ENCODE measurements at regions of chr21 and their contacts with region 1.

Region 1: DNA sequence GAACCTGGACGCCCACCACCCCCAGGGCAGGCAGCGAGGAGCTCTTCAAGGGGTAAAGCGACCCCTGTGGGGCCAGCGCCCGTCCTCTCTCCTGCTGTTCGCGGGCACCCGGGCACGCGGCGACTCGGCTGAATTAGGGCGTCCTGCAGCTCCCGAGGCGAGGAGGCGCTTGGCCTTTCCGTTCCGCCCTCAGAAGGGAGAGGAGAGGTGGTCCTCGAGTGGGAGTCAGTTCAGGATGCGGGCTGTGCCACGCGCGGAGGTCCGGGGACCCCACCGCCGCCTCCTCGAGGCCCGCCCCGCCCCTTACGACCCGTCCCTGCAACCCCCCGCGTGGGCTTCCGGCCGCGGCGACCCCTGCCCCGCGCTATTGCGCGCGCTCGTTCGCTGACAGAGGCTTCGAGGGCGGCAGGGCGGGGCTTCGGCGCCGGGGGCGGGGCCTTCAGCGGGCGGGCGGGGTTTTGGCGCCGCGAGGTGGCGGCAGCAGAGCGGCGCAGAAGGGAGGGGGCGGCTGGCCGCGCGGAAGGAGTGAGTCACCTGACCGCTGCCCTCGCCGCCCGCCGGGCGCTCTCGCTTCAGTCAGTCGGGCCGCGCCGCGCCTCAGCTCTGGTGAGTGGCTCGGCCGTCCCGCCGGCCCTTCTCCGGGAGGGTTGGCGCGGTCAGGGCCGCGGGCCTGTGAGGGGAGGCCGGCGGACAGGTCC is at the start of gene BACH1:
- DNase-seq: peak; percentile 71 to 92 (median 84)
- ATAC-seq: peak; percentile 67
- H3K4me3 ChIP-seq: peak within 1 kb of the TSS; percentile 63 to 68
- H3K4me3 Mint-ChIP-seq: peak within 1 kb of the TSS; percentile 87
- H3K27ac ChIP-seq: peak within 1 kb of the TSS; percentile 39 to 41
- H3K27ac Mint-ChIP-seq: peak within 1 kb of the TSS; percentile 88
- H3K4me1 ChIP-seq: peaks cover 54% of the 10 kb centered on the region
- H3K4me1 Mint-ChIP-seq: peaks cover 78% of the 10 kb centered on the region
- H3K27me3 ChIP-seq: no peaks in the 10 kb centered on the region
- H3K27me3 Mint-ChIP-seq: no peaks in the 10 kb centered on the region
- CTCF ChIP-seq: peak; percentile 33
- total RNA-seq, gene BACH1: 86.3 to 88.5 TPM

Region 2: DNA sequence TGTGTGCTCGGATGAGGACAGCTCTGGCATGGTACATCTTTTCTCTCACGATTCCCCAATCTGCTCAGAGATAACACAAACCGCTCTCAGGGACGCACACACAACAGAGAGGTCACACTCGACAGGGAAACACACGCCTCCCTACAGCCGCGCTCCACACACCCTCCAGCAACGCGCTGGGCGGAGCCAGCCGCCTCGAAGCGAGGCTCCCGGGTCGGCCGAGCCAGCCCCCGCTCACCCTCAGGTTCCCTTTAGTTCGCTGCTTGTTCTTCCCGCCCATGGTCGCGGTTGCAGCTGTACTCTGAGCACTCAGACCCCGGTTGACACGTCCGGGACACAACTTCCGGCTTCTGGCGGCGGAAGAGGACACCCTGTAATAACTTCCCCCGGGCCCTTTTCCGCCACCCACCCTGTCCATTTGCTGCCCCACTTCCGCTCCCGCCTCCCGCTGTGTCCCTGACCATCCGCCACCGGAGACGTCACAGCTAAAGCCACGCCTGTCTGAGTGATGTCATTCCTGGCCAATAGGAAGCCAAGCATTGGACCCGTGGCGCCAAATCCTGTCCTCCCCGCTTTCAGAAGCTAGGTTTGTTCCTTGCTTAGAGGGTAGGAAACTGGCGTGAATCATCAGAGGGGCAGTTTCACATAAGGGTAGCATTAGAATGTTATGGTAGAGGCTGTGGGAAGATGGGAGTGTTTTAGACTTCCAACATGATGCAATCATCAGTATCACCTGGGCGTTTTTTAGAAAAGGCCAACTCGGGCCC is 305.8 kb before region 1 on chr21 and contains the start of gene LTN1:
- CTCF ChIA-PET with region 1: no interaction called
- POLR2A ChIA-PET with region 1: no interaction called
- intact Hi-C with region 1: loop called in 1 of 2 experiments (anchors 1 kb)
- DNase-seq: peak; percentile 98 to 100 (median 99)
- ATAC-seq: peak; percentile 93
- H3K4me3 ChIP-seq: peak within 1 kb of the TSS; percentile 95 to 98
- H3K4me3 Mint-ChIP-seq: peak within 1 kb of the TSS; percentile 93
- H3K27ac ChIP-seq: peak within 1 kb of the TSS; percentile 84 to 88
- H3K27ac Mint-ChIP-seq: peak within 1 kb of the TSS; percentile 95
- H3K4me1 ChIP-seq: peaks cover 21% of the 10 kb centered on the region
- H3K4me1 Mint-ChIP-seq: peaks cover 40% of the 10 kb centered on the region
- H3K27me3 ChIP-seq: no peaks in the 10 kb centered on the region
- H3K27me3 Mint-ChIP-seq: no peaks in the 10 kb centered on the region
- CTCF ChIP-seq: no peak
- total RNA-seq, gene LTN1: 26.3 to 28.5 TPM

Region 3: DNA sequence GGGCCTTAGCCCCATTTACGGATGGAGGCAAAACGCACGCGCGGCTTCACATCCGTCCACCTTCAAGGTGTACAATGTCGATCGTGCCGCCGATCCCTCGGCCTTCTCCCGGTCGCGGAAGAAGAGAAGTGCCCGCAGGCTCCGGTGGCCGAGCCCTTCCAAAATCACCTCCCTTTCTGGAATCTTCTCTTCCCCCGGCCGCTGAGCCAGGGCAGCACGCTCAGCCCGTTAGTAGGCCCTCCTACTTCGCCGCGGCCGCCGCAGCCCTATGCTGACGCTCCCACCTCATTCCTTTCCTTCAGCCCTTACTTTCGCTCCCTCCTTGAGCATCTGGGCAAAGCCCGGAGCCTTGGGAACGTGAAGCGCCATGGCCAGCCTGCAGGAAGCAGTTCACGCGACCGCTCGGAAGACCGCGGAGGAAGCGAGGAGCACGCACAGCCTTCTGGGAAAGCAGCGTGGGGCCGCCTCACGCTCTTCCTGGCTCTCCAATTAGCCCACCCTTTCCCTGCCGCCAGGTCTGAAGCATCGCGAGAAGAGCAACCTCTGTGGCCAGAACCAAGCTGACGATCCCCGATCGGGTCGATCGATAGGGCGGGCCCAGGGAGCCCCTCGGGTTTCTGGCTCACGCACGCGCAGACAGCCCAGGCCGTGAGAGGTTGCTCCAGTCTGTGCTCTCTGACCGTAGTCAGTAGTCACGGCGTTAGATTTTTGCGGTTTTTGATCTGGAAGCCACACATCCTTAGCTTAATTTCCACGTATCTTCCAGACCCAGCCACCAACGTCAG is 225.1 kb before region 1 on chr21 and contains the start of gene CCT8:
- CTCF ChIA-PET with region 1: no interaction called
- POLR2A ChIA-PET with region 1: interaction called, 11 read pairs
- intact Hi-C with region 1: loop called (anchors 1 to 2 kb)
- DNase-seq: peak; percentile 95 to 100 (median 98)
- ATAC-seq: peak; percentile 93
- H3K4me3 ChIP-seq: peak within 1 kb of the TSS; percentile 88 to 92
- H3K4me3 Mint-ChIP-seq: peak within 1 kb of the TSS; percentile 100
- H3K27ac ChIP-seq: peak within 1 kb of the TSS; percentile 87 to 88
- H3K27ac Mint-ChIP-seq: peak within 1 kb of the TSS; percentile 98
- H3K4me1 ChIP-seq: peaks cover 42% of the 10 kb centered on the region
- H3K4me1 Mint-ChIP-seq: peaks cover 69% of the 10 kb centered on the region
- H3K27me3 ChIP-seq: no peaks in the 10 kb centered on the region
- H3K27me3 Mint-ChIP-seq: no peaks in the 10 kb centered on the region
- CTCF ChIP-seq: no peak
- total RNA-seq, gene CCT8: 104 to 116 TPM

Region 4: GRCh38 chr21:29265690-29266479 is 32.6 kb before region 1 on chr21:
- CTCF ChIA-PET with region 1: no interaction called
- POLR2A ChIA-PET with region 1: no interaction called
- intact Hi-C with region 1: no loop called
- DNase-seq: peak in 2 of 9 experiments; percentile 3 to 16
- ATAC-seq: no peak
- H3K4me3 ChIP-seq: no peak overlapping the region
- H3K4me3 Mint-ChIP-seq: no peak overlapping the region
- H3K27ac ChIP-seq: no peak overlapping the region
- H3K27ac Mint-ChIP-seq: no peak overlapping the region
- H3K4me1 ChIP-seq: no peaks in the 10 kb centered on the region
- H3K4me1 Mint-ChIP-seq: no peaks in the 10 kb centered on the region
- H3K27me3 ChIP-seq: no peaks in the 10 kb centered on the region
- H3K27me3 Mint-ChIP-seq: no peaks in the 10 kb centered on the region
- CTCF ChIP-seq: no peak

Region 5: GRCh38 chr21:29313662-29314408 is 15.3 kb after region 1 on chr21:
- CTCF ChIA-PET with region 1: interaction called, 3 read pairs
- POLR2A ChIA-PET with region 1: interaction called, 6 read pairs
- intact Hi-C with region 1: loop called in 1 of 2 experiments (anchors 2 kb)
- DNase-seq: no peak
- ATAC-seq: no peak
- H3K4me3 ChIP-seq: no peak overlapping the region
- H3K4me3 Mint-ChIP-seq: no peak overlapping the region
- H3K27ac ChIP-seq: no peak overlapping the region
- H3K27ac Mint-ChIP-seq: no peak overlapping the region
- H3K4me1 ChIP-seq: peaks cover 13% of the 10 kb centered on the region
- H3K4me1 Mint-ChIP-seq: peaks cover 69% of the 10 kb centered on the region
- H3K27me3 ChIP-seq: no peaks in the 10 kb centered on the region
- H3K27me3 Mint-ChIP-seq: no peaks in the 10 kb centered on the region
- CTCF ChIP-seq: no peak

Region 6: GRCh38 chr21:29372063-29372802 is 73.7 kb after region 1 on chr21:
- CTCF ChIA-PET with region 1: interaction called, 3 read pairs
- POLR2A ChIA-PET with region 1: no interaction called
- intact Hi-C with region 1: loop called in 1 of 2 experiments (anchors 2 kb)
- DNase-seq: peak in 8 of 9 experiments; percentile 26 to 83 (median 53)
- ATAC-seq: peak; percentile 79
- H3K4me3 ChIP-seq: no peak overlapping the region
- H3K4me3 Mint-ChIP-seq: no peak overlapping the region
- H3K27ac ChIP-seq: no peak overlapping the region
- H3K27ac Mint-ChIP-seq: no peak overlapping the region
- H3K4me1 ChIP-seq: peaks cover 9% of the 10 kb centered on the region
- H3K4me1 Mint-ChIP-seq: peaks cover 10% of the 10 kb centered on the region
- H3K27me3 ChIP-seq: no peaks in the 10 kb centered on the region
- H3K27me3 Mint-ChIP-seq: no peaks in the 10 kb centered on the region
- CTCF ChIP-seq: peak; percentile 63

Measured in CD8-positive, alpha-beta T cell (primary cell).